ENCODE measurements at regions of chr22 and their contacts with region 1.

Region 1: GRCh38 chr22:45268958-45269844 is 15.5 kb upstream of the UPK3A start:
- DNase-seq: peak; percentile 92
- CTCF ChIP-seq: peak; percentile 96

Region 2: DNA sequence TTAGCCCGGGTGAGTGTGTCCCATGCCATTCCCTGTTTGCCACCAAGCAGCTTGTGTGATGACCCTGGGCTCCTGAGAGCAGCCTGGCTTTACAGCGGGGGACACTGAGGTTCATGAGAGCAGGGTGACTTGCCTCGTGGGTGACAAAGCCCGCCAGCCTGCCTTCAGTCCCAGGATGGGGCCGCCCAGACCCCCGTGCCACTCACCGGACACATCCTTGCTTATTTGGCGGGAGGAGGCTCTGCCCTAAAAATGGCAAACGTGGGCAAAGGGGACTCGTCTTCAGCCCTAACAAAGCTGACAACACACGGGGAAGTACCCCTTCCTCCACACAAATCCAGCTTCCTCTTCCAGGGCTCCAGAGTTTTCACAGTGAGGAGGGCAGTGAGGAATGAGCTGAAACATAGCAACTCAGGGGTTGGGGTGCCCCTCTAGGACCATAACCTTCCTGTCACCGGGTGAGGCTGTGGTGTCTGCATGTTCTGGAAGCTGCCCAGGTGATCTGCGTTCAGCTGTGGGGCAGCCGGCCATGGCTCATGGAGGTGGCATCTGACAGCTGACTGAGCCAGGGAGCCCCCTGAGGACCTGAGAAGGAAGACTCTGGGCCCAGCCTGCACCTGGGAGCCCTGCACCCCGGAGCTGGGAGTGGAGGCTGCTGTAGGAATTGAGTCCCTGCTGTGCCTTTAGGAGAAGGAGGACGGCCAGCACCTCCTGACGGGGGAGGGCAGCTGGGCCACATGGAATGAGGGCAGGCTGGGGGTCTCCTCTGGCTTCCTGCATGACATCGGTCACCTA is 161.0 kb after region 1 on chr22:
- in situ Hi-C with region 1: loop called (anchors 5 kb)
- DNase-seq: no peak
- CTCF ChIP-seq: no peak

Region 3: GRCh38 chr22:45553351-45554039 is 284.3 kb after region 1 on chr22:
- in situ Hi-C with region 1: loop called (anchors 10 kb)
- DNase-seq: peak; percentile 83
- CTCF ChIP-seq: peak; percentile 71